GM10248 (cell line): ENCODE measurements at regions of chr9 and their contacts with region 1.

Region 1: DNA sequence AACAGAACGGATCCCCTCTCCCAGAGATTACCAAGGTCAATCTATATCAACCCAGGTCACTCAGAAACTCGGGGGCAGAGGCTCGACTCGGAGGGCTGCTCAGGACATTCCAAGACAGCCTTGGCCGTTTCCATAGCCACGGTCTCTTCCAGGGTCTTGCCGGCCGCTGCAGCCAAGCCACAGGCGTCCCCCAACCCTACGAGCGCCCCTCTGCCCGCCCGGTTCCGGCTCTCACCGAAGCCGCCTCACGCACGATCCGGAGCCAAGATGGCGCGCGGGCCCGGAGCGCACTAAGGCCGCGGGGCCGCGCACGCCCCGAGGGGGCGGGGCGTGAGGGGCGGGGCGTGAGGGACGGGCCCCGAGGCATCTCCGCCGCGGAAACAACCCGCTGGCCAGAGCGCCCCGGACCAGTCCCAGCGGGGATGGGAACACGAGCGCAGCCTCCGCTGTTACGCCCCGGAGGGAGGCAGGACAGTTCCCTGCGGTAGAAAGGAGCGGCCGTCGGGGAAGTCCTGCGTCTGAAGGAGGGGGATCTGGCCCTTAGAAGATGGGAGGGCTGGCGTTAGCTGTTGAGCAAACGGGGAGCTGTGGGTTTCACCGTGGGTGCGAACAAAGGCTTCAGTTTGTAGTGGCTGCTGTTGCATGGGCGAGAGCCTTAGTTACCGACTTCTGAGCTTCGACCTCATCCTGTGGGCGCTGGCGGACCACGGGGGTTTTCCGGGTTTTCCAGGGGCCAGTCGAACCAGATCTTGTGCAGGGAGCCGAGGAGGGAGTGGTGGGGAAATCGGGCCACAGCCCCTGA is at the start of gene RPP25L:
- DNase-seq: peak; percentile 96
- CTCF ChIP-seq: no peak

Region 2: GRCh38 chr9:34659592-34660535 is 47.8 kb after region 1 on chr9:
- CTCF ChIA-PET with region 1: interaction called, 14 read pairs
- POLR2A ChIA-PET with region 1: no interaction called
- DNase-seq: no peak
- CTCF ChIP-seq: no peak